Activated naive CD4-positive, alpha-beta T cell treated with anti-CD3 and anti-CD28 coated beads for 36 hours (primary cell): ENCODE measurements at regions of chr6 and their contacts with region 1.

Region 1: GRCh38 chr6:30861257-30862048 is 22.9 kb upstream of the DDR1 start:
- DNase-seq: peak; percentile 23
- H3K4me3 Mint-ChIP-seq: no peak overlapping the region
- H3K27ac Mint-ChIP-seq: no peak overlapping the region
- H3K4me1 Mint-ChIP-seq: peaks cover 11% of the 10 kb centered on the region
- H3K27me3 Mint-ChIP-seq: no peaks in the 10 kb centered on the region

Region 2: GRCh38 chr6:30793521-30794194 is 67.8 kb before region 1 on chr6:
- CTCF ChIA-PET with region 1: no interaction called
- intact Hi-C with region 1: no loop called
- DNase-seq: no peak
- H3K4me3 Mint-ChIP-seq: peak overlapping the region; percentile 60
- H3K27ac Mint-ChIP-seq: peak overlapping the region; percentile 89
- H3K4me1 Mint-ChIP-seq: peaks cover 52% of the 10 kb centered on the region
- H3K27me3 Mint-ChIP-seq: no peaks in the 10 kb centered on the region

Region 3: GRCh38 chr6:30871592-30872183 is 10.2 kb after region 1 on chr6:
- CTCF ChIA-PET with region 1: interaction called, 4 read pairs
- intact Hi-C with region 1: loop called (anchors 1 kb)
- DNase-seq: no peak
- H3K4me3 Mint-ChIP-seq: peak overlapping the region; percentile 4
- H3K27ac Mint-ChIP-seq: peak overlapping the region; percentile 90
- H3K4me1 Mint-ChIP-seq: peaks cover 34% of the 10 kb centered on the region
- H3K27me3 Mint-ChIP-seq: no peaks in the 10 kb centered on the region

Region 4: GRCh38 chr6:30963641-30964040 is 102.2 kb after region 1 on chr6:
- CTCF ChIA-PET with region 1: no interaction called
- intact Hi-C with region 1: no loop called
- DNase-seq: no peak
- H3K4me3 Mint-ChIP-seq: no peak overlapping the region
- H3K27ac Mint-ChIP-seq: no peak overlapping the region
- H3K4me1 Mint-ChIP-seq: no peaks in the 10 kb centered on the region
- H3K27me3 Mint-ChIP-seq: peaks cover 13% of the 10 kb centered on the region